Activated CD8-positive, alpha-beta T cell treated with anti-CD3 and anti-CD28 coated beads, Interleukin-2, amount 10 ng/mL, durations not matched to agents 7 days and 5 days (primary cell): ENCODE measurements at regions of chr15 and their contacts with region 1.

Region 1: DNA sequence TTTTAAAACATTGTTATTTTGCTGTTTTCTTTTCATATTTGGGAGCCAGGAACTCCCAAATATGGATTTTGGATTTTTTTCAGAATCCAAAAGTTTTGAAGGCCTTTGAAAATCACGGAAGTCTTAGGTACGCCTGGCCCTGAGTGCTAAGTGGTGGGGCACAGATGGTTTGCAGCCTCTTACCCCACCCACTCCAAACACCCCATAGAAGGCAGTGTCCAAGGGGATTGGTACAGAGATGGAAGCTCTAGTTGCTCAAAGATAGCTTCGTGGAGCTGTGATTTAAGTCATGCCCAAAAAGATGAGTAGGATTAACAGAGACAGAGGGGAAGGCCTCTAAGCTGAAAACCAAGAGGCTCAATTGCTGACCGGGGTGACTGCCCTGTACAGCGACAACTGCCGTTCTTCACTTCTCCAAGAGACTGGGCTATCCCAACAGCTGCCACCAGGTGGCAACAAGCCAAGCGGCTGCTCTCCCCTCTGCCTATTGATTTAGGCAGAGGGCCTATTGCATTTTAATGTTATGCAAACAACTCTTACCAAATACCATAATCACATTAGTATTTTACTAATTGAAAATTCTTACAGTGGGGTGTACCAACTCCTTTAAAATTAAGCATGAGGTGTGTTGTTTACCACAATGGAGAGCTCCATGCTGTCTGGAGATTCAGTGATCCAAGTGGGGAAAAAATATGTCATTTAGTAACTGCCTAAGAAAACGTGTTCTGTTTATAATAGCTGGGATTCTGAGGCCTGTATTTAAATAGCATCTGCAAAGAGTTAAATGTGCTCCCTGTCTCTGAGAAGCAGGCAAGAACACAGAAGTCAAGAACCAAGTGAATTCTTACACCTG is 64.0 kb upstream of the C15orf61 start:
- DNase-seq: peak; percentile 85
- ATAC-seq: peak; percentile 95
- H3K4me3 Mint-ChIP-seq: no peak overlapping the region
- H3K27ac Mint-ChIP-seq: no peak overlapping the region
- H3K4me1 Mint-ChIP-seq: no peaks in the 10 kb centered on the region
- H3K27me3 Mint-ChIP-seq: no peaks in the 10 kb centered on the region

Region 2: DNA sequence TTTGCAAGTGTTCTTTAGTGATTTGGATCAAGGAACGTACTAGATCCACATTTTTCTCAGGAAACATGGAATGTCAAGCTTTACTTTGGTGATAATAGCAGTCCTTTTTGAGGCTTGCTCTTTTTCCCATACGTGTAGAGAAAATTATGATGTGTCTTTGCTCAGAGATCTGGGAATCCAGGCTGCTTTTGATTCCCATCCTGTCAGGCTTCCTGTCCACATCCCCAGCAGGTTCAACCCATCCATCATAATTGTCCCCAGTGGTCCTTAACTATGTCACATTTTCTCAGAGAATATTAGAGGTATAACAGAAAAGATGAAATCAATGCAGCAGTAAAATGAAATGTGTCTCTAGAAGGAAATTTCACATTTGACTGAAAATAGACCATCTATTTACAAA is 90.9 kb before region 1 on chr15:
- CTCF ChIA-PET with region 1: no interaction called
- POLR2A ChIA-PET with region 1: no interaction called
- DNase-seq: no peak
- ATAC-seq: no peak
- H3K4me3 Mint-ChIP-seq: no peak overlapping the region
- H3K27ac Mint-ChIP-seq: no peak overlapping the region
- H3K4me1 Mint-ChIP-seq: peaks cover 10% of the 10 kb centered on the region
- H3K27me3 Mint-ChIP-seq: peaks cover 23% of the 10 kb centered on the region

Region 3: GRCh38 chr15:67444100-67444499 is 12.8 kb before region 1 on chr15:
- CTCF ChIA-PET with region 1: interaction called, 36 read pairs
- POLR2A ChIA-PET with region 1: no interaction called
- DNase-seq: no peak
- ATAC-seq: no peak
- H3K4me3 Mint-ChIP-seq: no peak overlapping the region
- H3K27ac Mint-ChIP-seq: no peak overlapping the region
- H3K4me1 Mint-ChIP-seq: no peaks in the 10 kb centered on the region
- H3K27me3 Mint-ChIP-seq: no peaks in the 10 kb centered on the region

Region 4: GRCh38 chr15:67468416-67468815 is 11.5 kb after region 1 on chr15:
- CTCF ChIA-PET with region 1: interaction called, 26 read pairs
- POLR2A ChIA-PET with region 1: no interaction called
- DNase-seq: no peak
- ATAC-seq: no peak
- H3K4me3 Mint-ChIP-seq: no peak overlapping the region
- H3K27ac Mint-ChIP-seq: no peak overlapping the region
- H3K4me1 Mint-ChIP-seq: no peaks in the 10 kb centered on the region
- H3K27me3 Mint-ChIP-seq: no peaks in the 10 kb centered on the region

Region 5: DNA sequence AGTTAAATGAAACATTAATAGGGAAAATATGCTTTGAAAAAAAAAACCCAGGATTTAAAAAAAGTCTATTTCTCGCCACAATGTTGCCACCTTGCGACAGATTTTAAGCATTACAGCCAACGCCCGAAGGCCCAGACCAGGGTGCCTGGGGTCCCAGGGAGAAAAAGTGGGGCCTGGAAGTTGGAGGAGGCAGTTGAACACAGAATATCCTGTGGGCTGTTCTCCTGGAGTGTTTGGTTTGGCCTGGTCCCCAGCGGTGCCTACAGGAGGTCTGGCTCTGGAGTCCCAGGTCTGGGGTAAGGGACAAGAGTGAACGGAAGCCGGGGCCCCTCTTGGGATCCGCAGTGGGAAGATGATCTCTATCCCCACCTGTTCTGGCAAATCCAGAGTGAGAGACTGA is 379.6 kb after region 1 on chr15:
- CTCF ChIA-PET with region 1: interaction called, 57 read pairs
- POLR2A ChIA-PET with region 1: interaction called, 3 read pairs
- DNase-seq: peak; percentile 66
- ATAC-seq: no peak
- H3K4me3 Mint-ChIP-seq: peak overlapping the region; percentile 66
- H3K27ac Mint-ChIP-seq: no peak overlapping the region
- H3K4me1 Mint-ChIP-seq: peaks cover 53% of the 10 kb centered on the region
- H3K27me3 Mint-ChIP-seq: peaks cover 58% of the 10 kb centered on the region